OCI-LY7 (cell line): ENCODE measurements at regions of chr6 and their contacts with region 1.

Region 1: DNA sequence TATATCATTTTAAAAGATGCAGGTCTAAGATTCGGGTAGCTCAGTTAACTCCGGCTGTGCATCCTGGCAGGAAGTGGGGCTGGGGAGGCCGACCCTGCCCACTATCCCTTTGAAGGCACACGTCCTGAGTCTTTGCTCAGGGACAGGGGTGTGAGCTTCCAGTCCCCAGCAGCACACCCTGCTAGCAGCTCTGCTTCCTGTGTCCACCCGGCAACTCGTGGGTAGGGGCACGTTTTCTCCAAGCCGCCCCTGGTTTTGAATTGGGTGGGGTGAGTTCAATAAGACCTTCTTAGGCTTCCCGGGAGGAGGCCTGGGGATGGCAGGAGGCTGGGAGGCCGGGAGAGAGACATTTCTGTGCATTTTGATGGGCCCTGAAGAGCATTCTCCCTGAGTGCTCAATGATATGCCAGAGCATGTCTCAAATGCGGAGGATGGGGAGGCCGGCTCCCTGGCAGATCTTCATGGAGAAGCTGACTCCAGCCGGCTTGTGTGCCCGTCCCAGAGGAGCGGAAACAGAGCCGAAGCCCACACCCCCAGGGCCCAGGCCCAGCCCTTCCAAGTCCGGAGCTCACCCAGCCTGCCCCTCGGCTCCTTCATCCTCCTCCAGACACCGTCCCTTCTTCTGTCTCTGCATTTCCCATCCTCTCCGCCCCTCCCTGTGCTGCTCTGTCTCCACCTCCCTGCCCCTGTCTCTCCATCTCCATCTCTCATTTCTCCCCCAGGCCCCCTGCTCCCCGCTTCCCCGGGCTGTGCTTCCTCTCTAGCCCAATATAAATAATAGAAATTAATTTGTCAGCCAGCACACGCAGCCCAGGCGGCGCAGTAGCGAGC is 36.3 kb upstream of the ZFAND3 start:
- DNase-seq: no peak
- H3K4me3 ChIP-seq: no peak overlapping the region
- H3K27ac ChIP-seq: no peak overlapping the region
- H3K4me1 ChIP-seq: no peaks in the 10 kb centered on the region
- CTCF ChIP-seq: no peak

Region 2: GRCh38 chr6:37826188-37826587 is 42.9 kb after region 1 on chr6:
- CTCF ChIA-PET with region 1: no interaction called
- POLR2A ChIA-PET with region 1: interaction called, 11 read pairs
- intact Hi-C with region 1: no loop called
- DNase-seq: no peak
- H3K4me3 ChIP-seq: no peak overlapping the region
- H3K27ac ChIP-seq: no peak overlapping the region
- H3K4me1 ChIP-seq: peaks cover 13% of the 10 kb centered on the region
- CTCF ChIP-seq: no peak